ENCODE measurements at regions of chr7 and their contacts with region 1.

Region 1: DNA sequence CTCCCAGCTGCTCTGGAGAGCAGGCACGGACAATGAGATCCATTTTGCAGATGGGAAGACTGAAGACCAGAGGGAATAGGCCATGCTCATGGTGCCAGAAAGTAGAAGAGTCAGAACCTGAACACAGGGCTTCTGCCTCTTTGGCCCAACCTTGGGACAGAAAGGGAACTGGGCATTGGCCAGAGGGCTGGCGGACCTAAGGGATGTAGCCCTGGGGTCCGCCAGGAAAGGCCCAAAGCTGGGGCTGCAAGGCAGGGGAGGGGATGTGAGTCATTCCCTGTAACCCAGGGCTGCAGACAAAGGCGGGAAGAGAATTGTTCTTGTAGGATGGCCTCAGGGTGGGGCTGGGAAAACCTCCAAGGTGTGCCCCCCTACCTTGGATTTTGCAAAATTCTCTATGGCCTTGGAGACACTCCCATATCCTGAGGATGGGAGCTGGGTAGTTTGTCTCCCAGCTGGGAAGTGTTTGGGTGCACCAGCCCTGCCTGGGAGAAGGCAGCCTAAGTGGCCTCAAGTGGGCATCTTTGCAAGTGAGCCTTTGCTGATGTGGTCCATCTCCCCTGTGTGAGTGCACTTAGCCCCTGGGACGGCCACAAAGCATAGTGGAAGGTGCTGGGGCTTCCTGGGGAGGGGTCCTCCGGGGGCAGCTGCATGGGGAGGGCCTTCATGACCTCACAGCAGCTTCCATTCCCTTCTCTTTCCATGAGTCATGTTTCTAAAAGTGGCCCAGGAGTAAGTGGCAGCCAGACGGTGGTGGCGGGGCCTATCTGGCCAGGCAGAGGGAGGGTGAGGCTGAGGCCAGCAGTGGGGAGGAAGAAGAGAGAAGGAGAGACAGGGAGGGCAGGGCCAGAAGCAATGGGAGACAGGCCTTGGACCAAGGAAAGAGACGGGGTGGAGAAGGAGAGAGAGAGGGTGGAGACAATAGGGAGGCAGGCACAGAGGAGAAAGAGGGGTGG is 9.2 kb downstream of the AQP1 start:
- DNase-seq: peak; percentile 81
- H3K4me3 ChIP-seq: no peak overlapping the region
- H3K27ac ChIP-seq: peak overlapping the region; percentile 58
- H3K4me1 ChIP-seq: peaks cover 24% of the 10 kb centered on the region
- H3K27me3 ChIP-seq: no peaks in the 10 kb centered on the region
- CTCF ChIP-seq: no peak
- POLR2A ChIP-seq: no peak

Region 2: GRCh38 chr7:30848121-30848855 is 72.6 kb before region 1 on chr7:
- CTCF ChIA-PET with region 1: no interaction called
- POLR2A ChIA-PET with region 1: no interaction called
- dilution Hi-C with region 1: no loop called
- intact Hi-C with region 1: loop called (anchors 2 kb)
- DNase-seq: peak; percentile 67
- H3K4me3 ChIP-seq: no peak overlapping the region
- H3K27ac ChIP-seq: no peak overlapping the region
- H3K4me1 ChIP-seq: peaks cover 30% of the 10 kb centered on the region
- H3K27me3 ChIP-seq: no peaks in the 10 kb centered on the region
- CTCF ChIP-seq: no peak
- POLR2A ChIP-seq: no peak

Region 3: GRCh38 chr7:30869794-30870611 is 50.9 kb before region 1 on chr7:
- CTCF ChIA-PET with region 1: no interaction called
- POLR2A ChIA-PET with region 1: no interaction called
- dilution Hi-C with region 1: no loop called
- intact Hi-C with region 1: loop called (anchors 1 kb)
- DNase-seq: peak; percentile 93
- H3K4me3 ChIP-seq: no peak overlapping the region
- H3K27ac ChIP-seq: peak overlapping the region; percentile 36
- H3K4me1 ChIP-seq: peaks cover 19% of the 10 kb centered on the region
- H3K27me3 ChIP-seq: no peaks in the 10 kb centered on the region
- CTCF ChIP-seq: peak in 1 of 2 donors; percentile 9
- POLR2A ChIP-seq: no peak

Region 4: GRCh38 chr7:30974605-30975255 is 53.9 kb after region 1 on chr7:
- CTCF ChIA-PET with region 1: no interaction called
- POLR2A ChIA-PET with region 1: no interaction called
- dilution Hi-C with region 1: no loop called
- intact Hi-C with region 1: no loop called
- DNase-seq: peak; percentile 62
- H3K4me3 ChIP-seq: no peak overlapping the region
- H3K27ac ChIP-seq: no peak overlapping the region
- H3K4me1 ChIP-seq: no peaks in the 10 kb centered on the region
- H3K27me3 ChIP-seq: peaks cover 22 to 29% of the 10 kb centered on the region in 2 experiments
- CTCF ChIP-seq: peak; percentile 61 to 81
- POLR2A ChIP-seq: no peak

Measured in endothelial cell of umbilical vein (primary cell).